Common myeloid progenitor, CD34-positive (primary cell): ENCODE measurements at regions of chr11 and their contacts with region 1.

Region 1: DNA sequence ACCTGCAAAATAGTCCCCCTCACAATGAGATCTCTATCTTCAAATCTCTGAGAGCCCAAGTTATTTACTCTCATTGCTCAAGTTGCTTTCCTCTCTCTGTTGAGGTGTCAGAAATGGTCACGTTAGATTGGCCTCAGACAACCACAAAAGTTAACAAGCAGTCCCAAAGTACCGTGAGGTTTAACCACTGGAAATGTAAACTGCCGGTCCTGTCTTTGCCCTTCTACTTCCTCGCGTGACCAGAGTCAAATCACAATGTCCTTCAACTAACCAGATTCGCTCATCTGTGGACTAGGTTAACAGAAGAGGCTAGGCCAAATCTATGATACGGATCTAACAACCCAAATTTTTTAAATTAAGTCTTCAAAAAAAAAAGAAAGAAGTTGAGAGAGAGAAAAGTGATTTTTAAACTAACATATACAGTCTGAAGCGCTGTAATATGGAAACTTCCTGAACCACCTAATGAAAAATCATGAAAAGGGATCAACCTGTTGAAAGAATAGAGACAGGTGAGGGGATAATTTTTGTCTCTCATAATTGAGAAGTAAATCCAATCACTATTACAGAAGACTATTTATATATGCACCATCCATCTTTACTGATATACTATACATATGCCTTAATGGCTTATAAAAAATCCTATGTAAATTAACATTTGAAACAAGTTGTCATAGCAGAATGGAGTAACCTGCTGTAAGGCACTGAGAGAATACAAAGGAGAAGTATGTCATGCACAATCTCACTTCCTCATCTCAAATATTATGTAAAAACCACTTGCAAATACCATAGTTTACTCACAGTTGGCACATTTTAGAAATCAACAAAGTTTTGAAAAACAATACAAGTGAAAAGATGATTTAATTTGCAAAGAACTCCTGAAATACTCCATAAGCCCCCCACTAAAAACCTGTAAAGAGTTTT is 3.3 kb upstream of the JAML start:
- DNase-seq: peak; percentile 51 to 91 (median 82)
- H3K4me3 ChIP-seq: no peak overlapping the region
- H3K27ac ChIP-seq: peak overlapping the region in 1 of 2 experiments; percentile 18
- H3K4me1 ChIP-seq: peaks cover 61 to 69% (median 65%) of the 10 kb centered on the region in 4 experiments
- H3K27me3 ChIP-seq: no peaks in the 10 kb centered on the region

Region 2: DNA sequence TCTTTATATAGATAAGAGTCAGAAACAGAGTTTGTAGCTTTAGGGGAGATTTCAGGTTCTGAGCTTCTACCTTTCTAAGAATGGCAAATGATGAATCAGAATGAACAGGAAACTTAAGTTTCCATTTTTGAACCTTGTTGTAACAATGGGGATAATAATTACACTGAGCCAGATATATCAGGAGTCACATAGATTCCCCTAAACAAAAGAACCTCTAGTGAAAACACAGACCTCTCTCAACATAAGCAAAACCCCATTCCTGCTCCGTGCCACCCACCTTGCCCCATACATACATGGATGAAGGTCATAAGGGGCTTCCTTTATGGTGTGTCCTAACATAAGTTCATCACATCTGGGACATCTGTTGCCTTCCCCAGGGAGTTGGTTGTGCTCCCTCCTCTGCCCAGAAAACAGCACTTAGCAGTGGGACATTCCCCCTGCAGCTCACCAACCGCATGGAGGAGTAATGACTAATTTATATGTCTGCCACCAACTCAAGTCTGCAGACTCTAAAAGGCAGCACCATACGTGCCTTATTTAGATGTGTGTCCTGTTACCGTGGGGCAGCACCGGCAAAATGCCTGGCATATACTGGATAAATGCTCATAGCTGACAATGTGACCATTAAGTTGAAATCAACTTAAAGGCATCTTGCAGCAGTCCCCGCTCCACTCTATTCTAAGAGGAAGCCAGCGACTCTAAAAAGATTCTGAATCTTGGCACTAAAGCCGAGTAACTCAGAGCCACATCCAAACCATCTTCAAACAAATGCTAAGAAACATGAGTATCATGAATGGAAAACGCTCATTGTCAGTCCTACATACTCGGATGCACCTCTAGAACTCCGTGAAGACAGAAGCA is 11.3 kb before region 1 on chr11:
- CTCF ChIA-PET with region 1: interaction called, 42 read pairs
- POLR2A ChIA-PET with region 1: interaction called, 4 read pairs
- DNase-seq: peak in 2 of 3 donors; percentile 54 to 64
- H3K4me3 ChIP-seq: peak overlapping the region in 3 of 7 experiments; percentile 10 to 35 (median 26)
- H3K27ac ChIP-seq: no peak overlapping the region
- H3K4me1 ChIP-seq: peaks cover 41 to 88% (median 80%) of the 10 kb centered on the region in 4 experiments
- H3K27me3 ChIP-seq: no peaks in the 10 kb centered on the region

Region 3: DNA sequence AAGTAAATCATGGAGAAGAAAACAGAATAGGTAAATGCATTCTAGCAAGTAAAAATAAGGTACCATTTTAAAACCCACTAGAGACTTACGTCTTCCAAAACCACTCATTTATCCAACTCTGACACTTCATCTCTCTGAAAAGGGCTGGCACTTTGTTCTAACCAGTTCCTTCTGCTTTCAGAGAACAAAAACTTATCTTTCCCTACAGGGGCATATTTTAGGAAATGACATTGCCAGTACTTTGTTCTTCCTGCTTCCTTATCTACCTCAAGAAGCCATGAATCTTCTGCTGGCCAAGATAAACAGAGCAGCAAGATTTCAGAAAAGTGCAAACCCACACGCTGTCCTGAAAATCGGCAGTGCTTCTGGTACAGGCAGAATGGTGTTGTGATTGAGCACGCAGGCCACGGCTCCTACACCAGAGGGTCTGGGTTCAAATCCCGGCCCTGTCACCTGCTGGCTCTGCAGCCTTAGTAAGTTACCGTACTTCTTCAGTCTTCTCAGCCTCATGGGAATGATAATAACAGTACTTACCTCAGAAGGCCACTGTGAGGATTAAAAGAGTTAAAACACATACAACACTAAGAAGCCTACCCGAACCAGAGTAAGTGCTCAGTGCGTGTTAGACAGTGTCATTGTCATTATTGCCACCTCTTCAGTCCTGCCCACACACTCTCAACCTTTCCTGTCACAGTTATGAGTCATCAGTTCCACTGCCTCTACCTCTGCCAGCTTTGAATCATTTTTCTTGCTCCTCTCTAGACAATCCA is 13.1 kb after region 1 on chr11:
- CTCF ChIA-PET with region 1: interaction called, 29 read pairs
- POLR2A ChIA-PET with region 1: interaction called, 3 read pairs
- DNase-seq: peak; percentile 97 to 99 (median 97)
- H3K4me3 ChIP-seq: peak overlapping the region in 4 of 7 experiments; percentile 9 to 58 (median 42)
- H3K27ac ChIP-seq: peak overlapping the region; percentile 85
- H3K4me1 ChIP-seq: peaks cover 46 to 71% (median 56%) of the 10 kb centered on the region in 4 experiments
- H3K27me3 ChIP-seq: no peaks in the 10 kb centered on the region

Region 4: DNA sequence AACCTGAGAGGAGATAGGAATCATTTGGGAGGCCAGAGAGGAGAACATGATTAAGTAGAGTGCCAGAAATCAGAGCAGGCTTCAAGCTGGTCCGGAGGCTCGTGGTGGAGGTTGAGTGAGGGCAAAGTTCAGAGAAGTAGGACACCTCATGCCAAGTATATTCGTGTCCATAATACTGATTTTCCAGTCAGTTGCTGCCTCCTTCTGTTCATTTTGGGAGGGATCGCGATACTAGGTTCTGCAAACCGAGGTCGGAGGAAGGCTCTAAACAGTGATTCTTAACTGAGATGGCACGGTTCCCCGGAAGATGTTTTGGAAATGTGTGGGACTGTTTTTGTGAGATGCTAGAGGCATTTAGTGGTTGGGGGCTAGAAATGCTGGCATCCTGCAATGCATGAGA is 62.8 kb after region 1 on chr11:
- CTCF ChIA-PET with region 1: interaction called, 12 read pairs
- POLR2A ChIA-PET with region 1: no interaction called
- DNase-seq: peak; percentile 60 to 69 (median 64)
- H3K4me3 ChIP-seq: no peak overlapping the region
- H3K27ac ChIP-seq: no peak overlapping the region
- H3K4me1 ChIP-seq: peaks cover 0 to 2% (median 0%) of the 10 kb centered on the region in 4 experiments
- H3K27me3 ChIP-seq: no peaks in the 10 kb centered on the region